Mammary epithelial cell (primary cell): ENCODE measurements at regions of chr4 and their contacts with region 1.

Region 1: DNA sequence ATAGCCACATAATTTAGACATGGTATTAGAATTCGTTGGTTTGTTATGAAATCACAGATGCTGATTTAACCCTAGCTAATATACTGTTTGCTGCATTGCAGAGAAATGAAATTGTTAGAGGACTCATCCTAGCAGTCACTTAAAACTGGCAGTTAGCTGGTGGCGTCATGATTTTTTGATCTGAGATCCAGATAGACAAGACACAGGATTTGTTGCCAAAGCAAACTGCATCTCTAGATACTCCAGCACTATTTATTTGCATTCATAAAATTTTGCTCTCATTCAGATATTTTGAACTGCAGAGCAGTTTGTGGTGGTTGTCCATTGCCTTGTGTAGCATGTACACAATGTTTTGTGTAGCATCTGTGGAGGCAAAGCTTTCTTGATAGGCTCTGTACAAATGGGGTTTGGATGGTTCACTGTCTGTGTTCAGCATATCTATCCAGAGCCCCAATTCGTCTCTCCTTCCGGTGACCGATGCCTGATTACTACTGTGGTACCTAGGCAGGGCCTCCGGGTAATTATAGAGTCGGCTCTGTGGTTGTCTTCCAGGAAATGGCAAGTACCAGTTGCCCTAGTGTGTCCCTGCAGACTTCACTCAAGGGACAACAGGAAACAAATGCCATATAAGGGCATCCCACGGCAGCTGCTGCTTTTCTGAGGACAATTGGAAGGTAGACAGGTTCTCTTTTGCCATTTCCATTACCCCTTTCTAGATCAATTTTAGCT is 30.1 kb upstream of the SPARCL1 start:
- DNase-seq: no peak
- H3K4me3 ChIP-seq: no peak overlapping the region
- H3K27ac ChIP-seq: no peak overlapping the region
- H3K4me1 ChIP-seq: peaks cover 9% of the 10 kb centered on the region
- H3K27me3 ChIP-seq: no peaks in the 10 kb centered on the region
- CTCF ChIP-seq: no peak

Region 2: DNA sequence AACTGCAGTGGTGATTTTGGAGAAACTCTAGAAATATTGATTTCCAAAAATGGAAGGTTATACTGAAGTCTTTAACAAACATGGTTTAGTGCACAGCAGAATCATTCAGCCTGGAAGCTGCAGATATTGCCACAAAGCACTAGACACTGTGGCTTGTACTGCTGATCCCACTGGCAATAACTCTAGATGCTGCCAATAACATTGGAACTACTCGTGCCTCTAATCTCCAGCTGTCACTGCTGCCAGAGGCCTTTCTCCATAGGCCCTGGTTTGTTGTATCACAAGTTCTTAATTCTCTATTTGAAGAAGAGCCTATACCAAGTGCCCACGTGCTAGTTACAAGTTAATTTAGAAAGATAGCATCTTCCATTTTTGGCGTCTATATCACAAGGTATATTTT is 110.1 kb after region 1 on chr4:
- CTCF ChIA-PET with region 1: no interaction called
- dilution Hi-C with region 1: no loop called
- in situ Hi-C with region 1: loop called in 1 of 2 experiments (anchors 10 kb)
- intact Hi-C with region 1: no loop called
- DNase-seq: no peak
- H3K4me3 ChIP-seq: no peak overlapping the region
- H3K27ac ChIP-seq: no peak overlapping the region
- H3K4me1 ChIP-seq: no peaks in the 10 kb centered on the region
- H3K27me3 ChIP-seq: no peaks in the 10 kb centered on the region
- CTCF ChIP-seq: no peak

Region 3: GRCh38 chr4:87838890-87839591 is 279.8 kb after region 1 on chr4:
- CTCF ChIA-PET with region 1: no interaction called
- dilution Hi-C with region 1: no loop called
- in situ Hi-C with region 1: no loop called
- intact Hi-C with region 1: no loop called
- DNase-seq: peak; percentile 23
- H3K4me3 ChIP-seq: no peak overlapping the region
- H3K27ac ChIP-seq: no peak overlapping the region
- H3K4me1 ChIP-seq: peaks cover 2% of the 10 kb centered on the region
- H3K27me3 ChIP-seq: no peaks in the 10 kb centered on the region
- CTCF ChIP-seq: peak; percentile 60 to 79